ENCODE measurements at regions of chr20 and their contacts with region 1.

Region 1: DNA sequence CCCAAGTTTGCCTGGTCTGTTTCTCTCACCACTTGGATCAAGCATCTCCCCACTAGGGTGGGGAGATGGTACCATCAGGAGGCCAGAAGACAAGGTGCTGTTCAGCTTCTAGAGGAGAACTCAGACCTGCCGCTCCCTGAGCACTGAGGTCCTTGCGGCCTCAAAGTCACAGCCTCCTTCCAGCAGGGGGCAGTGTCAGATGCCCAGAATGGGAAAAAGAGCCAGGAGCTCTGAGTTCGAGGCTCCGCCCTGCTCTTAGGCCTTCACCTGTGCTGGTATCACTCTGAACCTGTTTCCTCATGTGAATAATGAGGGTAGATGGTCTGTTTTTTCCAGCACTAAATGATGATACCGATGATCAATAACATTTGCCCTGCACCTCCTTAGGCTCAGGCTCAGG is 68.7 kb downstream of the TOX2 start:
- DNase-seq: peak in 1 of 2 experiments; percentile 70
- H3K4me3 ChIP-seq: no peak overlapping the region
- H3K27ac ChIP-seq: no peak overlapping the region
- H3K4me1 ChIP-seq: no peaks in the 10 kb centered on the region
- H3K27me3 ChIP-seq: no peaks in the 10 kb centered on the region
- CTCF ChIP-seq: peak; percentile 36 to 82 (median 63)
- EP300 ChIP-seq: no peak
- POLR2A ChIP-seq: no peak
- RAD21 ChIP-seq: peak; percentile 35 to 54

Region 2: DNA sequence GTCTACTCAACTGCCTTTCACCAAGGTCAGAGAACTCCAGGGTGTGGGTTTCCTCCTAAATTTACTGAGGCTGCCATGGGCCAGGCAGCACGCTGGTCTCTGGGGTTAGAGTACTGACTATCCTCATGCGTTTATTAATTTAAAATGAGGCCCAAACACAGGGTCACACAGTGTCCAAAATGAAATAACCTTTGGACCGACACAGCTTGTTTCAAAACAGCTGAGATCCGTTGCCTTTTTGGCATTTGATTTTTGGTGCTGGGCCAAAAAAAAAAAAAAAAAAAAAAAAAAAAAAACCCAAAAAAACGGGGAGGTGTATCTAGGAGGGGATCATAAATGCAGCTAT is 83.3 kb before region 1 on chr20:
- CTCF ChIA-PET with region 1: no interaction called
- POLR2A ChIA-PET with region 1: no interaction called
- DNase-seq: no peak
- H3K4me3 ChIP-seq: no peak overlapping the region; a peak in 1 of 8 replicates
- H3K27ac ChIP-seq: no peak overlapping the region
- H3K4me1 ChIP-seq: peaks cover 5 to 13% (median 7%) of the 10 kb centered on the region in 4 experiments; a peak in 5 of 7 replicates
- H3K27me3 ChIP-seq: peaks cover 0 to 3% (median 0%) of the 10 kb centered on the region in 4 experiments; a peak in 3 of 7 replicates
- CTCF ChIP-seq: no peak
- EP300 ChIP-seq: no peak
- POLR2A ChIP-seq: no peak
- RAD21 ChIP-seq: no peak

Region 3: DNA sequence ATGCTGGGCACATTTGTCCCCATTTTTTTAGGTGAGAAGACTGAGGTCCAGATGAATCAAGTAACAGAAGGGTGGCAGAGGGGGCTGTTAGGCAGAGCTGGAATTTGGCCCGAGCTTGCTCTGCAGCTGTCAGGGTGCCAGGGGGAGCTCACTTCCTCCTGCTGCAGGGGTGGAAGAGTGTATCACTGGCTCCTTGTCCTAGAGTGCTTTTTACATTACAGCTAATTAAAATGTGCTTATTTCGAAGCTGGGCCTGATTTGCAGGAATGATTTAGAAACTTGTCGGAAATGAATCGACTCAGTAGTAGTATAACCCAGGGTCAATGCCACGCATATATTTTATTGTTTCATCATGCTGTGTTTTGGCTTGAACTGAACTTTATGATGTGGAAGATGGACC is 57.6 kb before region 1 on chr20:
- CTCF ChIA-PET with region 1: no interaction called
- POLR2A ChIA-PET with region 1: no interaction called
- DNase-seq: no peak
- H3K4me3 ChIP-seq: no peak overlapping the region
- H3K27ac ChIP-seq: no peak overlapping the region
- H3K4me1 ChIP-seq: peaks cover 0 to 2% (median 0%) of the 10 kb centered on the region in 4 experiments; a peak in 2 of 7 replicates
- H3K27me3 ChIP-seq: no peaks in the 10 kb centered on the region; a peak in 1 of 7 replicates
- CTCF ChIP-seq: peak in 1 of 3 experiments; percentile 24; a peak in 1 of 4 replicates
- EP300 ChIP-seq: no peak
- POLR2A ChIP-seq: no peak
- RAD21 ChIP-seq: peak in 1 of 2 experiments; percentile 14; a peak in 1 of 4 replicates

Region 4: GRCh38 chr20:43969501-43970182 is 13.7 kb before region 1 on chr20:
- CTCF ChIA-PET with region 1: interaction called, 32 read pairs
- POLR2A ChIA-PET with region 1: interaction called, 3 read pairs
- DNase-seq: no peak
- H3K4me3 ChIP-seq: no peak overlapping the region
- H3K27ac ChIP-seq: no peak overlapping the region
- H3K4me1 ChIP-seq: peaks cover 0 to 7% (median 1%) of the 10 kb centered on the region in 4 experiments; a peak in 3 of 7 replicates
- H3K27me3 ChIP-seq: peaks cover 0 to under 1% (median 0%) of the 10 kb centered on the region in 4 experiments; a peak in 1 of 7 replicates
- CTCF ChIP-seq: no peak
- EP300 ChIP-seq: no peak
- POLR2A ChIP-seq: no peak
- RAD21 ChIP-seq: no peak

Region 5: GRCh38 chr20:43996240-43996930 is 13.0 kb after region 1 on chr20:
- CTCF ChIA-PET with region 1: interaction called, 12 read pairs
- POLR2A ChIA-PET with region 1: no interaction called
- DNase-seq: no peak
- H3K4me3 ChIP-seq: no peak overlapping the region
- H3K27ac ChIP-seq: no peak overlapping the region
- H3K4me1 ChIP-seq: no peaks in the 10 kb centered on the region
- H3K27me3 ChIP-seq: no peaks in the 10 kb centered on the region
- CTCF ChIP-seq: no peak
- EP300 ChIP-seq: no peak
- POLR2A ChIP-seq: no peak
- RAD21 ChIP-seq: no peak